ENCODE measurements at regions of chr2 and their contacts with region 1.

Region 1: DNA sequence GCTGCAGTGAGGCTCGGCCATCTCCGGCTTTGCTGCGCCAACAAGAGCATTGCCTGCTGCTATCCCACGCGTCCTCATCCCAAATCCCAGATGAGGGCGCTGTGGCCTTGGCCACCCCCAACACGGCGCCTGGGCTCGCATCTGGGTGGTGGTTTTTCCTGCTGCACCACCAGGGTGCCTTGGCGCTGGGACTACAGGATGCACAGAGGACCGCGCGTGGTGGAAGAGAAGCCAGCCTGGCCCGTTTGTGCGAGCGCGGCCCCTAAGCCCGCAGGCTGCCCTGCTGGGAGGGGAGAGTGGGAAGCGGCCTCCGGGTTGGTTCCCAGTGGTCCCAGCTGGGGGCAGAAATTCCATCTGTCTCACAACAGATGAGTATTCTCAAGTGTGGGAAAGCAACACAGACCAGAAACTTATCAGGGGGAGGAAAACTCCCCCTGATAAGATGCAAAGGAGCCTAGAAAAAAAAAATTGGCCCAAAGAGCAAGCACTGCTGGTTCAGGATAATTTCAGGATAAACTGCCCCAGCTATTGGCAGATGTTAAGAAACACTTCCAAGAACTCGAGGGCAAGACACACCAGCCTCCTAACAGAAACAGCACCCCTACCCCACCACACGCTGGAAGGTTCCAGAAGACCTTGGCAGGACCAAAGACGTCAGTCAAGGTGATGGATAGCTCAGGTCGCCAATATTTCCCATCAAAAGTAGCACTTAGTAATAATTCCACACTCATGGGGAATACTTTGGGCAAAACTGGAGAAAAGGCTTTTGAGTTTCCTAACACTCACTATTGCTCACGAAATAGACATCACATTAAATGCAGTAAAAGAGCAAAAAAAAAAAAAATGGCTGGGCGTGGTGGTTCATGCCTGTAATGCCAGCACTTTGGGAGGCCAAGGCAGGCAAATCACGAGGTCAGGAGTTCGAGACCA is 152.1 kb downstream of the PXDN start:
- DNase-seq: peak; percentile 94
- H3K4me3 ChIP-seq: no peak overlapping the region
- H3K27ac ChIP-seq: no peak overlapping the region
- H3K4me1 ChIP-seq: peaks cover 15% of the 10 kb centered on the region
- H3K27me3 ChIP-seq: no peaks in the 10 kb centered on the region
- CTCF ChIP-seq: peak; percentile 96

Region 2: GRCh38 chr2:424306-425165 is 1167.7 kb before region 1 on chr2:
- CTCF ChIA-PET with region 1: no interaction called
- POLR2A ChIA-PET with region 1: no interaction called
- intact Hi-C with region 1: no loop called
- DNase-seq: no peak
- H3K4me3 ChIP-seq: no peak overlapping the region
- H3K27ac ChIP-seq: no peak overlapping the region
- H3K4me1 ChIP-seq: no peaks in the 10 kb centered on the region
- H3K27me3 ChIP-seq: no peaks in the 10 kb centered on the region
- CTCF ChIP-seq: no peak

Region 3: DNA sequence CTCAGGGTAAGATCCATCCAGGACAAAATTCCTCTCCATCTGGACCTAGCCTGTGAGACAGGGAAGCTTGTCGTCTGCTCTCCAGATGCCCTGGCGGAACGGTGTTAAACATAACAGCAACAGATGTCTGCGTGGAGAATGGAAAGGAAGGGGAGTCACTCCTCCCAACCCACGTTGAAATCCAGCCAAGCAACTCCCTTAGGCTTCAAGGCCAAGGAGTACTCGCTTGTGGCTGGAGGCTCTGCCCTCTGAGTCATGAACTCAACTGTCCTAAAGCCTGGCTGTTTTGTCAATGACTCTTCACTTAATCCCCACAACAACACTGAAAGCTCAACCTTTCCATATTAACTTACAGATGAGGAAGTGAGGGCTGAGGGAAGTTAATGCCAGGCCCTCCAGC is 136.8 kb before region 1 on chr2:
- CTCF ChIA-PET with region 1: no interaction called
- POLR2A ChIA-PET with region 1: no interaction called
- intact Hi-C with region 1: no loop called
- DNase-seq: no peak
- H3K4me3 ChIP-seq: no peak overlapping the region
- H3K27ac ChIP-seq: no peak overlapping the region
- H3K4me1 ChIP-seq: no peaks in the 10 kb centered on the region
- H3K27me3 ChIP-seq: peaks cover 13% of the 10 kb centered on the region
- CTCF ChIP-seq: no peak

Region 4: DNA sequence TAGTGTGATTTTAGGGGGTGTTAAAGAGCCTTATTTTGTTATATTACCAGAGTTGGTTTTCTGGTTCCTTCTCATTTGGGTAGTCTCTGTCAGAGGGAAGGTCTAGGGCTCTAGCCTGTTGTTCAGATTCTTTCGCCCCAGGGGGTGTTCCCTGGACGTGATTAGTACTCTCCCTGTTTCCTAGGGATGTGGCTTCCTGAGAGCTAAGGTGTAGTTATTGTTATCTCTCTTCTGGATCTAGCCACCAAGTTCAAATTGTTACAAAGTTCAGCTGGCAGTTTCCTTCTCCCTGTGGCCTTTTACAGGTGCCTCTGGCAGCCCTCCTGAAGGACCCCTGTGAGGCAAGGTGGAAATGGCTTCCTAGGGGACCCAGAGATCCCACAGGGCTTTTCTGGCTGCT is 123.0 kb before region 1 on chr2:
- CTCF ChIA-PET with region 1: no interaction called
- POLR2A ChIA-PET with region 1: no interaction called
- intact Hi-C with region 1: no loop called
- DNase-seq: no peak
- H3K4me3 ChIP-seq: no peak overlapping the region
- H3K27ac ChIP-seq: no peak overlapping the region
- H3K4me1 ChIP-seq: no peaks in the 10 kb centered on the region
- H3K27me3 ChIP-seq: no peaks in the 10 kb centered on the region
- CTCF ChIP-seq: no peak

Region 5: GRCh38 chr2:1572638-1573037 is 19.6 kb before region 1 on chr2:
- CTCF ChIA-PET with region 1: no interaction called
- POLR2A ChIA-PET with region 1: no interaction called
- intact Hi-C with region 1: no loop called
- DNase-seq: no peak
- H3K4me3 ChIP-seq: no peak overlapping the region
- H3K27ac ChIP-seq: no peak overlapping the region
- H3K4me1 ChIP-seq: no peaks in the 10 kb centered on the region
- H3K27me3 ChIP-seq: no peaks in the 10 kb centered on the region
- CTCF ChIP-seq: no peak

Region 6: GRCh38 chr2:1742681-1743395 is 150.6 kb after region 1 on chr2:
- CTCF ChIA-PET with region 1: no interaction called
- POLR2A ChIA-PET with region 1: no interaction called
- intact Hi-C with region 1: loop called (anchors 2 kb)
- DNase-seq: peak; percentile 92
- H3K4me3 ChIP-seq: peak overlapping the region; percentile 95
- H3K27ac ChIP-seq: peak overlapping the region; percentile 87
- H3K4me1 ChIP-seq: peaks cover 30% of the 10 kb centered on the region
- H3K27me3 ChIP-seq: no peaks in the 10 kb centered on the region
- CTCF ChIP-seq: peak; percentile 76

Region 7: GRCh38 chr2:1769703-1770422 is 177.6 kb after region 1 on chr2:
- CTCF ChIA-PET with region 1: interaction called, 3 read pairs
- POLR2A ChIA-PET with region 1: no interaction called
- intact Hi-C with region 1: loop called (anchors 1 kb)
- DNase-seq: peak; percentile 63
- H3K4me3 ChIP-seq: no peak overlapping the region
- H3K27ac ChIP-seq: no peak overlapping the region
- H3K4me1 ChIP-seq: peaks cover 5% of the 10 kb centered on the region
- H3K27me3 ChIP-seq: no peaks in the 10 kb centered on the region
- CTCF ChIP-seq: peak; percentile 92

Region 8: GRCh38 chr2:1817256-1818051 is 225.2 kb after region 1 on chr2:
- CTCF ChIA-PET with region 1: no interaction called
- POLR2A ChIA-PET with region 1: no interaction called
- intact Hi-C with region 1: loop called (anchors 1 kb)
- DNase-seq: peak; percentile 69
- H3K4me3 ChIP-seq: no peak overlapping the region
- H3K27ac ChIP-seq: no peak overlapping the region
- H3K4me1 ChIP-seq: peaks cover 12% of the 10 kb centered on the region
- H3K27me3 ChIP-seq: no peaks in the 10 kb centered on the region
- CTCF ChIP-seq: peak; percentile 99